Activated CD4-positive, alpha-beta T cell treated with anti-CD3 and anti-CD28 coated beads for 36 hours (primary cell): ENCODE measurements at regions of chr6 and their contacts with region 1.

Region 1: DNA sequence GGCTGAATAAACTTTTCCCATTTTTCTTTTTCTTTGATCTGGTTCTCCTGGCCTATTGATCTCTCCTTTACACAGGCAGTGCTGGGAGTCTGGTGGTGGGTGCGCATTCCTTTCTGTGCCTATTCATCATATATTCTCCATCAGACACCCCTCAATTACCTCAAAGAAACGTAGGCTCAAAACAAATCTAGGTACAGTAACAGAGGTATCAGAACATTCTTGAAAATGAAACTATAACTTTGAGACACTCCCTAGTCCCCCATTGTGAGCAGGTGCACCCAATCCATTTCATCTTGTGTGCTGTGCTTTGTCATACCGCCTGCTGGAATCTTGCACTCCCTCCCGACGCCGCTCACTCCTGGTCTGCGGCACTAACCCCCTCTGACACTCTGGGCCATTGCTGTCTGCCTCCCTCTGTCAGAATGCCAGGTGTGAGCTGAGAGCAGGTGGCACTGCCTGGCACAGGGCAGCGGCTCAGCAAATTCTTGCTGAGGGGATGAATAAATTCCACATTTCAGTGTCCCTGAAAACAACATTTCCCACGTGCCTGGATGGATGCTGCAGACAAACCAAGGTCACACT is 303.4 kb upstream of the EXOC2 start:
- DNase-seq: no peak
- ATAC-seq: no peak
- H3K4me3 Mint-ChIP-seq: no peak overlapping the region
- H3K27ac Mint-ChIP-seq: no peak overlapping the region
- H3K4me1 Mint-ChIP-seq: no peaks in the 10 kb centered on the region
- H3K27me3 Mint-ChIP-seq: peaks cover 27% of the 10 kb centered on the region

Region 2: GRCh38 chr6:1917626-1918371 is 921.4 kb after region 1 on chr6:
- CTCF ChIA-PET with region 1: no interaction called
- POLR2A ChIA-PET with region 1: no interaction called
- intact Hi-C with region 1: loop called in 1 of 2 experiments (anchors 5 kb)
- DNase-seq: peak; percentile 74
- ATAC-seq: peak; percentile 100
- H3K4me3 Mint-ChIP-seq: no peak overlapping the region
- H3K27ac Mint-ChIP-seq: no peak overlapping the region
- H3K4me1 Mint-ChIP-seq: peaks cover 20% of the 10 kb centered on the region
- H3K27me3 Mint-ChIP-seq: no peaks in the 10 kb centered on the region

Region 3: GRCh38 chr6:2129182-2129621 is 1132.8 kb after region 1 on chr6:
- CTCF ChIA-PET with region 1: no interaction called
- POLR2A ChIA-PET with region 1: no interaction called
- intact Hi-C with region 1: no loop called
- DNase-seq: no peak
- ATAC-seq: no peak
- H3K4me3 Mint-ChIP-seq: no peak overlapping the region
- H3K27ac Mint-ChIP-seq: no peak overlapping the region
- H3K4me1 Mint-ChIP-seq: peaks cover 32% of the 10 kb centered on the region
- H3K27me3 Mint-ChIP-seq: no peaks in the 10 kb centered on the region